ENCODE measurements at regions of chr19 and their contacts with region 1.

Region 1: GRCh38 chr19:37906869-37907734 is at the start of gene SIPA1L3:
- H3K4me3 ChIP-seq: peak within 1 kb of the TSS; percentile 68
- H3K27ac ChIP-seq: peak within 1 kb of the TSS; percentile 81
- H3K4me1 ChIP-seq: peaks cover 27% of the 10 kb centered on the region
- CTCF ChIP-seq: peak; percentile 79; the same call in 1 of the 2 replicates

Region 2: DNA sequence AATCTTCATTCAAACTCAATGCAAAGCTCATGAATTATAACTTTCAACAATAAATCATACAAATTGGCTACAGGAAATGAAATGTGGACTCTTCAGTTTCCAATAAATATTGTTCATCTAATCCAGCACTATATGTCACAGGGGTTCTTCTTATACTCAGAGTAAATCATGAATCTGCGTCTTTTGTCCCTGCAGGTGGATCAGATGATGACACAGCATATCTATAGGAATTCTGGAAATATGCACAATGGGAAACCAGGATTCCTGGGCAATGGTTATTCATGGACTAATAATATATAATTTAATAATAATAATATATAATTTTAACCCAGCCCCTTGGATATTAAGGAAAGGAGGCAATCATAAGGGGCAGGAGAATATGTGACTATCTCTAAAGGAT is 136.1 kb before region 1 on chr19:
- CTCF ChIA-PET with region 1: no interaction called
- POLR2A ChIA-PET with region 1: no interaction called
- H3K4me3 ChIP-seq: no peak overlapping the region
- H3K27ac ChIP-seq: no peak overlapping the region
- H3K4me1 ChIP-seq: no peaks in the 10 kb centered on the region
- CTCF ChIP-seq: no peak

Region 3: DNA sequence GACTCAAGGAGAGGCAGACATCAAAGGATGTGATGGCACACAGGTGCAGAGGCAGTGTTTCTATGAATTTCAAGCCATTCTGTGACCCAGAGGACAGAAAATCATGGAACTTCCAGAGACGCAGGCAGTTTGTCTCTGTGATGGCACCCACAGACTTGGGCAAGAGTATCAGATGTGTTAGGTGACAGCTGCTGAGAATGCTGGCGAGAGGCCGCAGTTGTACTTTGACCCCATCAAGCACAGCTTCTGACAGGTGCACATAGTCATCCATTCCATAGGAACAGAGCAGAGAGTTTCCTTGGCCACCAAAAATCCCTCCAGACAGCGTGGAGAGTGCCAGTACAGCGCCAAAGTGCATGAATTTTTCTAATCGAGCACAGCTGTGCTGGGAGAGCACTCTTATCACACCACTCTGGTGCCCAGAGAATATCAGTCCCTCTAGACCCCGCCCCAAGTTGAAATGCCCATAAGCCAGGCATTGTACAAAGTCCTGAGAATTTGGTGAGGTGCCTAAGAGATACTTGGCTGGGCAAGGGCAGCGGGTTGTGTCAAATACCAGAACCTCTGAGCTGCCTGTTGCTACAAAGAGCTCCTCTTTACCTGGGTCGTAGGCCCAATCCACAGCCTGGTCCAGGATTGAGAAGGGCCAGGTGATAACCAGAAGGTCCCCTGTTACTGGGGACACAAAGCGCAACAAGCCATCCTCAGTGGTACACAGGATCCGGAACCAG is 13.1 kb before region 1 on chr19:
- CTCF ChIA-PET with region 1: interaction called, 19 read pairs
- POLR2A ChIA-PET with region 1: interaction called, 6 read pairs
- H3K4me3 ChIP-seq: no peak overlapping the region
- H3K27ac ChIP-seq: no peak overlapping the region
- H3K4me1 ChIP-seq: no peaks in the 10 kb centered on the region
- CTCF ChIP-seq: no peak

Region 4: GRCh38 chr19:37969662-37970061 is 62.6 kb after region 1 on chr19:
- CTCF ChIA-PET with region 1: no interaction called
- POLR2A ChIA-PET with region 1: no interaction called
- H3K4me3 ChIP-seq: no peak overlapping the region
- H3K27ac ChIP-seq: no peak overlapping the region
- H3K4me1 ChIP-seq: peaks cover 7% of the 10 kb centered on the region; the same call in 1 of the 2 replicates
- CTCF ChIP-seq: no peak

Region 5: GRCh38 chr19:38004521-38005223 is 97.6 kb after region 1 on chr19:
- CTCF ChIA-PET with region 1: interaction called, 15 read pairs
- POLR2A ChIA-PET with region 1: interaction called, 38 read pairs
- H3K4me3 ChIP-seq: no peak overlapping the region
- H3K27ac ChIP-seq: peak overlapping the region; percentile 85
- H3K4me1 ChIP-seq: peaks cover 29% of the 10 kb centered on the region
- CTCF ChIP-seq: no peak

Region 6: GRCh38 chr19:38089440-38089839 is 182.3 kb after region 1 on chr19:
- CTCF ChIA-PET with region 1: interaction called, 41 read pairs
- POLR2A ChIA-PET with region 1: interaction called, 5 read pairs
- H3K4me3 ChIP-seq: no peak overlapping the region
- H3K27ac ChIP-seq: no peak overlapping the region
- H3K4me1 ChIP-seq: no peaks in the 10 kb centered on the region
- CTCF ChIP-seq: no peak

Region 7: DNA sequence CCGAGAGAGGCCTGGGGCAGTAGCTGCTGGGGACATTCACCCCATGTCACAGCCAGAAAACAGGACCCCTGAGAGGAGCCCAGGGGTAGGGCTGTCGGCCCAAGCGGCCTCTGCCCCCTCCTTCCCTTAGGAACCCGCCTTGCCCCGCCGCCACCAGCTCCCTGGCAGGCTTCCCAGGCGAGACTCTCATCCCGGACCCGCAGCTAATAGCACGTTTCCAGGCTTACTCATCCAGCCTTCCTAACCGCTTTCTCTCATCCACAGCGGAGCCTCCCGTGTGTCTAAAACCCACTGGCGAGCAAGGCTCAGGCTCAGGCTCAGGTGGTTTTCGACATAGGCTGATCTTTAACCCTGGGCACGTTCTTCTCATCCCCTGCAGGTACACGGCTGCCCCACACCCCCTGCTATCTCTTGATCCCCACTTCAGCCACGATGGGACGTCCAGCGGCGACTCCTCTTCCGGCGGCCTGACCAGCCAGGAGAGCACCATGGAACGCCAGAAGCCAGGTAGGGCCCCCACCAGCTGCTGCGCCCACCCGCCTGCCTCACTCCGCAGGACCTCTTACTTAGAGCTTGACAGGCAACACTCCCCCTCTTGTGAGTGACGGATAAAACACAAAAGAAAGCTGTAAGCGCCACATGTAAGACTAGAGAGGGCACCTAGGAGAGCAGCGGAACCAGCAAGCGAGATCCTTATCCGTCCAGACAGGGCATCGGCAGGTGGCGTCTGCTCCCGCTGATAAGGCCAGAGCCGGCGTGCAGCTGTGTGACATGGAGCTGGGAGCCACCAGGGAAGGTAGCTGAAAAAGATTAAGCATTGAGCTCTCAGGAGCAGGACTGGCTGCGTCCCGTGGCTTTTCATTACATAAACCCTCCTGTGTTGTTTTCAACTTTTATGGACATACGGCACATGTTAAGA is 245.6 kb after region 1 on chr19:
- CTCF ChIA-PET with region 1: interaction called, 13 read pairs
- POLR2A ChIA-PET with region 1: no interaction called
- H3K4me3 ChIP-seq: no peak overlapping the region
- H3K27ac ChIP-seq: no peak overlapping the region
- H3K4me1 ChIP-seq: no peaks in the 10 kb centered on the region
- CTCF ChIP-seq: no peak

Region 8: GRCh38 chr19:38335949-38336637 is 429.0 kb after region 1 on chr19:
- CTCF ChIA-PET with region 1: interaction called, 13 read pairs
- POLR2A ChIA-PET with region 1: interaction called, 3 read pairs
- H3K4me3 ChIP-seq: peak overlapping the region; percentile 66
- H3K27ac ChIP-seq: peak overlapping the region; percentile 80
- H3K4me1 ChIP-seq: peaks cover 14% of the 10 kb centered on the region
- CTCF ChIP-seq: no peak

Region 9: GRCh38 chr19:38929929-38930775 is 1023.0 kb after region 1 on chr19 and contains the start of gene SARS2:
- CTCF ChIA-PET with region 1: interaction called, 10 read pairs
- POLR2A ChIA-PET with region 1: interaction called, 4 read pairs
- H3K4me3 ChIP-seq: peak within 1 kb of the TSS; percentile 70
- H3K27ac ChIP-seq: peak within 1 kb of the TSS; percentile 81
- H3K4me1 ChIP-seq: peaks cover 10% of the 10 kb centered on the region; the same call in 1 of the 2 replicates
- CTCF ChIP-seq: peak; percentile 100

Measured in HEK293 (cell line).